Activated CD8-positive, alpha-beta T cell treated with anti-CD3 and anti-CD28 coated beads, Interleukin-2, amount 10 ng/mL, durations not matched to agents 7 days and 5 days (primary cell): ENCODE measurements at regions of chr1 and their contacts with region 1.

Region 1: GRCh38 chr1:150629115-150629928 is at the start of gene ENSA:
- DNase-seq: peak; percentile 98
- ATAC-seq: peak; percentile 91
- H3K4me3 Mint-ChIP-seq: no peak within 1 kb of the TSS
- H3K27ac Mint-ChIP-seq: no peak within 1 kb of the TSS
- H3K4me1 Mint-ChIP-seq: peaks cover 19% of the 10 kb centered on the region
- H3K27me3 Mint-ChIP-seq: no peaks in the 10 kb centered on the region
- total RNA-seq, gene ENSA: 208 to 214 TPM

Region 2: DNA sequence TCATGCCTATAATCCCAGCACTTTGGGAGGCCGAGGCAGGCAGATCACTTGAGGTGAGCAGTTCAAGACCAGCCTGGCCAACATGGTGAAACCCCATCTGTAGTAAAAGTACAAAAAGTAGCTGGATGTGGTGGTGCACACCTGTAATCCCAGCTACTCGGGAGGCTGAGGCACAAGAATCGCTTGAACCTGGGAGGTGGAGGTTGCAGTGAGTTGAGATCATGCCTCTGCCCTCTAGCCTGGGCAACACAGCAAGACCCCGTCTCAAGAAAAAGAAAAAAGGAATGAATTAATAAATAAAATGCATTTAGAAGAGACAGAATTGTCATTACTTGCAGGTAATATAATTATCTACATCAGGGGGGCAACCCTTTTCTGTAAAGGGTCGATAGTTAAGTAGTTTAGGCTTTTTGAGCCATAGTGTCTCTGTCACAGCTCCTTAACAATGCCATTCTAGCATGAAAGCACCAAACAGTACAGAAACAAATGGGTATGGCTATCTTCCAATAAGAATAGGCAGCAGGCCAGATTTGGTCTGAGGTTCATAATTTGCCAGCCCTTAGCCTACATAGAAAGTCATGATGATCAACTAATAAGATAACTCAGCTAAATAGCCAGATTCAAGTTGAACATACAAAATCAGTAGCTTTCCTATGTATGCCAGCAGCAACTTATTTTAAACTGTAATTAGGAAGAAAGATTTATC is 208.6 kb before region 1 on chr1:
- CTCF ChIA-PET with region 1: no interaction called
- POLR2A ChIA-PET with region 1: no interaction called
- DNase-seq: no peak
- ATAC-seq: no peak
- H3K4me3 Mint-ChIP-seq: no peak overlapping the region
- H3K27ac Mint-ChIP-seq: no peak overlapping the region
- H3K4me1 Mint-ChIP-seq: peaks cover 5% of the 10 kb centered on the region
- H3K27me3 Mint-ChIP-seq: no peaks in the 10 kb centered on the region

Region 3: GRCh38 chr1:150567717-150568593 is 61.4 kb before region 1 on chr1:
- CTCF ChIA-PET with region 1: interaction called, 386 read pairs
- POLR2A ChIA-PET with region 1: interaction called, 224 read pairs
- DNase-seq: peak; percentile 73
- ATAC-seq: peak; percentile 10
- H3K4me3 Mint-ChIP-seq: peak overlapping the region; percentile 72
- H3K27ac Mint-ChIP-seq: peak overlapping the region; percentile 95
- H3K4me1 Mint-ChIP-seq: peaks cover 97% of the 10 kb centered on the region
- H3K27me3 Mint-ChIP-seq: no peaks in the 10 kb centered on the region

Region 4: GRCh38 chr1:150572918-150573647 is 56.2 kb before region 1 on chr1:
- CTCF ChIA-PET with region 1: interaction called, 5 read pairs
- POLR2A ChIA-PET with region 1: interaction called, 224 read pairs
- DNase-seq: no peak
- ATAC-seq: no peak
- H3K4me3 Mint-ChIP-seq: peak overlapping the region; percentile 97
- H3K27ac Mint-ChIP-seq: peak overlapping the region; percentile 82
- H3K4me1 Mint-ChIP-seq: peaks cover 77% of the 10 kb centered on the region
- H3K27me3 Mint-ChIP-seq: no peaks in the 10 kb centered on the region

Region 5: GRCh38 chr1:150696590-150697524 is 67.5 kb after region 1 on chr1 and contains the start of gene GOLPH3L:
- CTCF ChIA-PET with region 1: interaction called, 11 read pairs
- POLR2A ChIA-PET with region 1: interaction called, 5 read pairs
- DNase-seq: peak; percentile 96
- ATAC-seq: peak; percentile 100
- H3K4me3 Mint-ChIP-seq: peak within 1 kb of the TSS; percentile 93
- H3K27ac Mint-ChIP-seq: peak within 1 kb of the TSS; percentile 83
- H3K4me1 Mint-ChIP-seq: peaks cover 18% of the 10 kb centered on the region
- H3K27me3 Mint-ChIP-seq: peaks cover 8% of the 10 kb centered on the region
- total RNA-seq, gene GOLPH3L: 19.4 to 21.2 TPM